OCI-LY7 (cell line): ENCODE measurements at regions of chr7 and their contacts with region 1.

Region 1: GRCh38 chr7:90749262-90749661 is 153.1 kb downstream of the CDK14 start:
- DNase-seq: peak; percentile 75
- H3K4me3 ChIP-seq: no peak overlapping the region
- H3K27ac ChIP-seq: peak overlapping the region; percentile 61
- H3K4me1 ChIP-seq: peaks cover 73% of the 10 kb centered on the region
- CTCF ChIP-seq: no peak

Region 2: DNA sequence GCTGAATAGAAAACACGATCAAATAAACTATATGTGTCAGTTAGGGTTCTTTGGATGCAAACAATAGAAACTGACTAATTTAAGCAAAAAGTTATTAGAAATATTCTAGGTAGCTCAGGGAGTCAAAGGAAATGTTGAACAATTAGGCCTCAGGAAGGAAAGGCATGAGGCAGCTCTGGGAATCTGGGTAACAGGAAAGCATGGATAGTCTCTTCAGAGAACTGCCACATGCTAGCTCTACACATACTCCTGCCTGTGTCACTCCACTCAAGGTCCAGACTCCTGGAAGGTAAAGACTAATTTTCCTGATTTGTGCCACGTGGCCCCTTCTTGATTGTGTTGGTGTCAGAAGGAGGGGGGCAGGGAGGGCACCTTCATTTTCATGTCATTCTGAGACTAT is 303.6 kb before region 1 on chr7:
- CTCF ChIA-PET with region 1: no interaction called
- POLR2A ChIA-PET with region 1: no interaction called
- intact Hi-C with region 1: no loop called
- DNase-seq: no peak
- H3K4me3 ChIP-seq: no peak overlapping the region
- H3K27ac ChIP-seq: no peak overlapping the region
- H3K4me1 ChIP-seq: no peaks in the 10 kb centered on the region
- CTCF ChIP-seq: no peak

Region 3: DNA sequence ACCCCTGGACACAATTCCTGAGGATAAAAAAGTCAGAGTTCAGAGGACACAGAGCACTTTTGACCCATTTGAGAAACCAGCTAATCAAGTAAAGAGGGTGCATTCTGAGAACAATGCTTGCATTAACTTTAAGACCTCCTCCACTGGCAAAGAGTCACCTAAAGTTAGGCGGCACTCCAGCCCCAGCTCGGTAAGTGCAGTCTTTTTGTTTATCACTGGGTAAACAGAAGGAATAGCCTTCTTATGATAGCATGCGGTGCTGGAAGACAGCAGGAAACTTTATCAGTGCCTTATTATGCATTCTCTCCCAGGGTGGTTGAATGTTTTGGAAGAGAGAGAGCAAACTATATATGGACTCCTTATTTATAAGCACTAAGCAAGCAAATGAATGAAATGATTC is 22.6 kb before region 1 on chr7:
- CTCF ChIA-PET with region 1: no interaction called
- POLR2A ChIA-PET with region 1: interaction called, 13 read pairs
- intact Hi-C with region 1: no loop called
- DNase-seq: no peak
- H3K4me3 ChIP-seq: peak overlapping the region; percentile 66
- H3K27ac ChIP-seq: peak overlapping the region; percentile 81
- H3K4me1 ChIP-seq: peaks cover 80% of the 10 kb centered on the region
- CTCF ChIP-seq: no peak

Region 4: DNA sequence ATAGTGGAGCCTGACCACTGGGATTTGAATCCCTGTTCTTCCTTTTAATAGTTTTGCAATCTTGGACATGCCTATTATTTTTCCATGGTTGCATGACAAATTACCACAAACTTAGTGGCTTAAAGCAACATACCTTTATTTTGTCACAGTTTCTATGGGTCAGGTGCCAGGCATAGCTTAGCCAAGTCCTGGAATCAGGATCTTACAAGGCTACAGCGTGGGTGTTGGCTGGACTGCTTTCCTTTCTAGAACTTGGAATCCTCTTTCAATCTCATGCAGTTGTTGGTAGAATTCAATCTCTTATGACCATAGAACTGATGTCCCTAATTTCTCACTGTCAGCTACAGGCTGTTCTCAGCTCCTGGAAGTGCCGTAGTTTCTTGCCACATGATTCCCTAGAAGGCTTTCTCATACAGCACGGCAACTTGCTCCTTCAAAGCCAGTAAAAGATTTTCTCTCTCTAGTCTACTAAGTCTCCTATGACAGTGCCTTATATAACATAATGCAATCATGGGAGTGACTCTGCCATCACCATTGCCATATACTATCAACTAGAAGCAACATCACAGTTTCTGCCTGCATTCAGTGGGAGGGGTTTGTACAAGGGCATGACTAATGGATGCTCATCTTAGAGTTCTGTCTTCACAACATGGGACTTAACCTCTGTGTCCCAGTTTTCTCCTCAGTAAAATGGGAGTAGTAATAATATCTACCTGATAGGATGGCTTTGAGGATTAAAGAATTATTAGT is 271.5 kb after region 1 on chr7:
- CTCF ChIA-PET with region 1: no interaction called
- POLR2A ChIA-PET with region 1: no interaction called
- intact Hi-C with region 1: no loop called
- DNase-seq: no peak
- H3K4me3 ChIP-seq: no peak overlapping the region
- H3K27ac ChIP-seq: no peak overlapping the region
- H3K4me1 ChIP-seq: no peaks in the 10 kb centered on the region
- CTCF ChIP-seq: no peak